ENCODE measurements at regions of chr14 and their contacts with region 1.

Region 1: GRCh38 chr14:74362361-74362915 is 14.2 kb downstream of the VRTN start:
- DNase-seq: peak; percentile 63
- ATAC-seq: peak; percentile 85
- H3K4me3 ChIP-seq: no peak overlapping the region
- H3K27ac ChIP-seq: no peak overlapping the region
- H3K4me1 ChIP-seq: no peaks in the 10 kb centered on the region
- H3K27me3 ChIP-seq: peaks cover 0 to 35% of the 10 kb centered on the region in 2 experiments; a peak in 2 of 5 replicates
- CTCF ChIP-seq: peak; percentile 90
- EP300 ChIP-seq: no peak
- POLR2A ChIP-seq: no peak
- RAD21 ChIP-seq: peak; percentile 75

Region 2: DNA sequence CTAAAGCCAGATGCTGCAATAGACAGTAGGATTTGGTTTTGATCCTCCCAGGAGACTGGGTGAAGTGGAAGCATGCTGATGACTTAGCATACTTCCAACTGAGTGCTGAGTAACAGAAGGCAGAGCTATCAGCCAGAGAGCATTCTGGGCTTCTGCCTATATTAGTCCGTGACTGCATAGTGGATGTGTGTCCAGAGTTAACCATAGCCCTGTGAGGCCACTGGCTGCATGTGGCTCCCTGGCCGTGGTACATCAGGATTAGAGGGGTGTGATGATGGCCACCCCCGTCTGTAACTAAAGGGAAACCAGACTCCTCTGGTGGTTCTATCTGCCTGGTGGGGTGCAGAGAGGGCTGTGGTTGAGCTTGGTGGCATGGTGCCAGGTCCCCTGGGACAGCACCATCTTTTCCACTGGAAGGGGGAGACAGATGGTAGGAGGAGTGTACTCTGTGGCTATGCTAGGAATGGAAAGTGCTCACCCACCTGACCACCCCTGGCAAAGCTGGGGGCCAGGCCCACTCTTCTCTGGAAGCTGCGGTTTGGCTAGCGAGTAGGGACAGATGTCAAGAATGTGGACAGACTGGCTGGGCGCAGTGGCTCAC is 87.1 kb before region 1 on chr14:
- CTCF ChIA-PET with region 1: no interaction called
- POLR2A ChIA-PET with region 1: no interaction called
- in situ Hi-C with region 1: no loop called
- intact Hi-C with region 1: no loop called
- DNase-seq: no peak
- ATAC-seq: peak; percentile 56
- H3K4me3 ChIP-seq: no peak overlapping the region
- H3K27ac ChIP-seq: no peak overlapping the region
- H3K4me1 ChIP-seq: peaks cover 5% of the 10 kb centered on the region
- H3K27me3 ChIP-seq: 0 out of 5 replicates have a peak, but pooled peaks cover 0 to 4% of the 10 kb centered on the region in 2 experiments
- CTCF ChIP-seq: no peak
- EP300 ChIP-seq: no peak
- POLR2A ChIP-seq: no peak
- RAD21 ChIP-seq: no peak

Region 3: DNA sequence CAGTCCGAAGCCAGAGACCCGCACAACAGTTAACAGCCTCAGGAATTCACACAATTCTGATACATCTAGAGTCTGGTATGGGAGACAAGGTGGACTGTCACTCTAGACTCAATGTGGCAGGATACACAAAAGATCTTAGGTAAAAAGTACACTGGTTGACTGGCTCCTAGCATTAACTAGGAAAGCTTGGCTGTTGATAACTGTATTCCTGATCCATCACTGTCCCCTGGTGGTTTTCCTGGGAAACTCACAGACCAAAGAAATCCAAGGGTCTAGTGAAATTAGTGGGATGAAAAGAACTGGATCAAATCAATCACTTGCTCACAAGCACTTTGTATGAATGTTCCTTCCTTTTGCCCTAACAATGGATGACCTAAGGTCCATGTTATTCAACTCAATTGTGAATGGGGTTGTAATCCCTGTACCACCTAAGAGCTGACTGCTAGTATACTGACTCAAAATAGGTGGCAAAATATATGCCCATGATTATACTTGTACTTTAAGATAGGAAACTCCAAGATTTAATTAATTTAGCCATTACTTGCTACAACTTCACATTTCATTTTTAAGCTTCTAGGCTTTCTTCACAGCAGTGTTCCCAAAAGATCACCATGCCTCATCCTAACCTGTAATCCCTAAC is 116.7 kb after region 1 on chr14:
- CTCF ChIA-PET with region 1: interaction called, 17 read pairs
- POLR2A ChIA-PET with region 1: interaction called, 3 read pairs
- in situ Hi-C with region 1: loop called (anchors 5 kb)
- intact Hi-C with region 1: no loop called
- DNase-seq: peak; percentile 13
- ATAC-seq: peak; percentile 65
- H3K4me3 ChIP-seq: no peak overlapping the region
- H3K27ac ChIP-seq: no peak overlapping the region
- H3K4me1 ChIP-seq: no peaks in the 10 kb centered on the region
- H3K27me3 ChIP-seq: no peaks in the 10 kb centered on the region
- CTCF ChIP-seq: peak; percentile 69
- EP300 ChIP-seq: no peak
- POLR2A ChIP-seq: no peak
- RAD21 ChIP-seq: peak; percentile 65

Region 4: DNA sequence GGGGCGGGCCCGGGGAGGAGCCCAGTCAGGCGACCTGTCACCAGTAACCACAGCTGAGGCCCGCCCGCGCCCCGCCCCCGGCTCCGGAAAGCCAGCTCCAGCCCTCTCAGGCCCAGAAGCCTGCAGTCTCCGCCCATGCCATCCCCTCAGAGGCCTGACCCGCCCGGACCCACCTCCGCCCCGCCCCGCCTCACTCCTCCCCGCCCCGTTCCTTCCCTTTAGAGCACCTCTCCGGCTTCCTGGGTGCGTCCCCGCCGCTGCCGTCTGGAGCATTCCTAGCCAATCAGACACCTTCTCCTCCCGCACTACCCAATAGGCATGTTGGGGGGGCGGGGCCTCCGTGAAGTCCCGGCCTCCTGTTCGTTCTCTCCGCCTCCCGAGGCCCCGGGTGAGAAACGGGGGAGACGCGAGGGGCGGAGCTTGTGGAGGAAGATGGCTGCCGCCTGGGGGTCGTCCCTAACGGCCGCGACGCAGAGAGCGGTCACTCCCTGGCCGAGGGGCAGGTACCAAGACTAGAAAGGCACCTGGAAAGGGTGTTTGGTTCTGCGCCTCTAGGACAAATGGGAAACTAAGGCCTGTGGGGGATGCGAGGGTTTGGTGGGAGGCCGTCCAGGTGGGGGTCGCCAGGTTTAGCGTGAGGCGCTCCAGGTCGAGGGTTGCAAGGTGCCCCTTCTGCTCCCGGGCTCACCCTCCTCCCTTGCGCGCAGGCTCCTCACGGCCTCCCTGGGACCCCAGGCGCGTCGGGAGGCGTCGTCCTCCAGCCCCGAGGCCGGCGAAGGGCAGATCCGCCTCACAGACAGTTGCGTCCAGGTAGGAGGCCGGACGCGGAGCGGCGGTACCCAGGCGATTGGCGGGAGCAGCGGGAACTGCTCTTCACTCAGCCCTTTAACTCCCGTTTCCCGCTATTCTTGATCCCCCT is 131.2 kb after region 1 on chr14 and contains the start of gene ISCA2:
- CTCF ChIA-PET with region 1: interaction called, 4 read pairs
- POLR2A ChIA-PET with region 1: no interaction called
- in situ Hi-C with region 1: no loop called
- intact Hi-C with region 1: loop called (anchors 1 kb)
- DNase-seq: peak; percentile 98
- ATAC-seq: peak; percentile 96
- H3K4me3 ChIP-seq: peak within 1 kb of the TSS; percentile 94 to 100 (median 99)
- H3K27ac ChIP-seq: peak within 1 kb of the TSS; percentile 97
- H3K4me1 ChIP-seq: peaks cover 35% of the 10 kb centered on the region
- H3K27me3 ChIP-seq: no peaks in the 10 kb centered on the region; a peak in 1 of 5 replicates
- CTCF ChIP-seq: no peak
- EP300 ChIP-seq: 0 out of 4 replicates have a peak, but pooled peaks of 1 of the 2 experiments have one; percentile 5
- POLR2A ChIP-seq: peak; percentile 69 to 83
- RAD21 ChIP-seq: no peak
- total RNA-seq, gene ISCA2: 43.4 and 53.0 TPM in 2 replicates